Prostate gland (tissue), 2 donors: ENCODE measurements at regions of chr19 and their contacts with region 1.

Region 1: DNA sequence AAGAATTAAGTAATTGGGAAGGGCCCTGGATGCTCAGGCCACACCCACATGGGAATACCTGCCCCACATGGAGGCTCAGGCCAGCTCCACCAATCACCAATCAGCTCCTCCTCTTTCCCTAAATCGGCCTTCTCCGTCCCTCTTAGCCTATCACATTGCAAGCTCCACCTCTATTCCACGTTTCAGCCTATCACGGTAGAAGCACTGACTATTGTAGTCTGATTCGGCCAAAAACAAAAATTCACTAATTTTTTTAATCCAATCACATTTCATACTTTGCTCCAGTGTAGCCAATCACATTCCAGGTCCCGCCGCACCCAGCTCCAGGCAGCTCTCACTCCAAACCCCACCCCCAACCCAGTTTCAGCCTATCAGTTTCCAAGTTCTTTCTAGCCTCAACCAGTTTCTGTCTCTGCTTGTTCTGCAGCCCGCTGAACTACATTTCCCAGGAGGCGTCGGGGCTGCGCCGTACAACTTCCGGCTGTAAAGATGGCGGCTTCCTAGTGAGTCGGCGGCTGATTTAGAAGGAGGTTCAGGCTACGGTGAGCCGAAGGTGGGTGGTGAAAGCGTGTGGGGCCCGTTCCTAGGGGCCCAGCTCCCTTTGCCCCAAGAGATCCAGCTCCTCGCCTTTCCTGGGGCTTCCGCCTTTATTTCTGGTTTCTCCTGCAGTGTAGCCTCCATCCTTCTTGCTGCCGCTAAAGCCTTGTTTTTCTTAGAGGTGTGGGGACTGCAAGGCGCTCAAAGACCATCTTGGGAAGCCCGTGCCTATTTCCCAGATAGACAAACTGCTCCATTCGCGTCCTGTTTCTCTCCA is at the start of gene BABAM1:
- DNase-seq: peak; percentile 98
- H3K4me3 ChIP-seq: peak within 1 kb of the TSS; percentile 64 to 81
- H3K27ac ChIP-seq: peak within 1 kb of the TSS; percentile 66 to 70
- H3K4me1 ChIP-seq: no peaks in the 10 kb centered on the region
- H3K27me3 ChIP-seq: no peaks in the 10 kb centered on the region
- CTCF ChIP-seq: peak in 1 of 4 experiments; percentile 8
- POLR2A ChIP-seq: peak; percentile 16
- total RNA-seq, gene BABAM1: 80.0 to 81.6 TPM

Region 2: GRCh38 chr19:17246681-17247425 is 20.3 kb before region 1 on chr19:
- intact Hi-C with region 1: loop called (anchors 2 kb)
- DNase-seq: no peak
- H3K4me3 ChIP-seq: peak overlapping the region; percentile 53 to 87
- H3K27ac ChIP-seq: peak overlapping the region; percentile 79 to 80
- H3K4me1 ChIP-seq: no peaks in the 10 kb centered on the region
- H3K27me3 ChIP-seq: no peaks in the 10 kb centered on the region
- CTCF ChIP-seq: peak in 1 of 4 experiments; percentile 18
- POLR2A ChIP-seq: no peak

Region 3: DNA sequence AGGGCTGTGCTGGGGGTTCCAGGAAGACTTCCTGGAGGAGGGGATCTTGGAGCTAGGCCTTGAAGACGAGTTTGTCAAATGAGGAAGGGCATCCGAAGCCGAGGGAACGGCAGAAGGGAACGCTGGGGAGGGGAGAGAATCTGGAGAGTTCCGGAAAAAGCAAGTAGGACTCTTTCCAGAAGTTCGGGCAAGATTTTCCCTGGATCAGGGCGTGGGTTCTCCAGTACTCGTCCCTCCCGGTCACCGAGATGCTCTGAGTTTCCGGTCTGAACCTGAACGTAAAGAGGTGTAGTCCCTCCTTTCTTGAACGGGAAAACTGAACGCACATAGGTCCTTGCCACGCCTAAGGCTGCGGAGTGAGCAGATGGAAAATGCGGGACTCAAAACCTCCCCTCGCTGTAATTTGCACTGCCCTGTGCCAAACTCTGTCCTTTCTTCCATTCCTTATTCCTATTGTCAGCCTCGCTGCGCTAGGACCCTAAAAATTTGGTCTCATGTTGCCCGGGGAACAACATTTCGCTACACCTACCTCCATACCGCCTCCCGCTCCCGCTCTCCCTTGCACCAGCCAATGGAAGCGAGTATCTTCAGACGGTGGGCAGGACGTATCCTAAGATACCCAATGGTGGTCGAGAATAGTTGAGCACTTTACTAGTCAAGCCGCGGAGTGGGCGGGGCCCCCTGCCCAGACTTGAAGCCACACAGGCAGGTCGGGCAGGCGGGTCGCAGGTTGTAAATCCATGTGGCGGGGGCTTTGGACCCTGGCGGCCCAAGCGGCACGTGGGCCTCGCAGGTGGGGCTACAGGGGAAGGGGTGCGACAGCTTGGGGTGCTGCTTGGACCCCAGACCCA is 69.9 kb after region 1 on chr19 and contains the start of gene GTPBP3:
- intact Hi-C with region 1: no loop called
- DNase-seq: peak; percentile 98
- H3K4me3 ChIP-seq: peak within 1 kb of the TSS; percentile 64 to 66
- H3K27ac ChIP-seq: peak within 1 kb of the TSS; percentile 90 to 91
- H3K4me1 ChIP-seq: peaks cover 4% of the 10 kb centered on the region
- H3K27me3 ChIP-seq: no peaks in the 10 kb centered on the region
- CTCF ChIP-seq: peak in 2 of 4 experiments; percentile 4 to 5
- POLR2A ChIP-seq: peak; percentile 45
- total RNA-seq, gene GTPBP3: 42.4 to 67.0 TPM